Left colon (tissue), 2 donors: ENCODE measurements at regions of chr17 and their contacts with region 1.

Region 1: DNA sequence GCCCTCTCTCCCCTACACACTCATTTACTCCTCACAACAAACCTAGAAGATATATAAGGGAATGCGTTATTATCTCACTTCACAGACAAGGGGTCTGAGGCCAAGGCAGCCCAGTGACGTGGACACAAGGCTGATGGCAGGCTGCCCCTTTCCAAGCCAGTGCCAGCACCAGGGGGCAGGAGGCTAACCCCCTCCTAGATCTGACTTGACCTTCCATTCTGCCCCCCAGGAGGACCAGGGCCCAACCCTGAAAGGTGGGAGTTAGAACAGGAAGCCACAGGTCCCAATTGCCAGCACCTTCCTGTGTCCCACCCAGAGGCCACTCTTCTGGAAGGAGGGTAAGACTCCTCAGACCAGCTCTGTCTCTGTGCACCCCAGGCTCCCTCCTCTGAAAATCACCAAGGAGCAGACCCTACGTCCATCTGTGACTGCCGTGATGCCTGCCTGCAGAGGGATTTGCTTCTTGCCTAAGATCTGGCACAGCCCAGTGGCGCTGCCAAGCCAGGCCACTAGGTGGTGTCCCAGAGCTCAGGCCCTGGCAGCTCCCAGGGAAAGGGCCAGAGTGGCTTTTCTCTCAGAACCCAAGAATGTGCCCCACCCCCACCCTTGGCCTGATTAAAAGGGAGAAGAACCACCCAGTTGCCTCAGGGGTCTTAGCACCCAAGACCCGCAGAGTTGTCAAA is 42.4 kb upstream of the MRPS23 start:
- DNase-seq: peak; percentile 79 to 90
- ATAC-seq: peak; percentile 82

Region 2: DNA sequence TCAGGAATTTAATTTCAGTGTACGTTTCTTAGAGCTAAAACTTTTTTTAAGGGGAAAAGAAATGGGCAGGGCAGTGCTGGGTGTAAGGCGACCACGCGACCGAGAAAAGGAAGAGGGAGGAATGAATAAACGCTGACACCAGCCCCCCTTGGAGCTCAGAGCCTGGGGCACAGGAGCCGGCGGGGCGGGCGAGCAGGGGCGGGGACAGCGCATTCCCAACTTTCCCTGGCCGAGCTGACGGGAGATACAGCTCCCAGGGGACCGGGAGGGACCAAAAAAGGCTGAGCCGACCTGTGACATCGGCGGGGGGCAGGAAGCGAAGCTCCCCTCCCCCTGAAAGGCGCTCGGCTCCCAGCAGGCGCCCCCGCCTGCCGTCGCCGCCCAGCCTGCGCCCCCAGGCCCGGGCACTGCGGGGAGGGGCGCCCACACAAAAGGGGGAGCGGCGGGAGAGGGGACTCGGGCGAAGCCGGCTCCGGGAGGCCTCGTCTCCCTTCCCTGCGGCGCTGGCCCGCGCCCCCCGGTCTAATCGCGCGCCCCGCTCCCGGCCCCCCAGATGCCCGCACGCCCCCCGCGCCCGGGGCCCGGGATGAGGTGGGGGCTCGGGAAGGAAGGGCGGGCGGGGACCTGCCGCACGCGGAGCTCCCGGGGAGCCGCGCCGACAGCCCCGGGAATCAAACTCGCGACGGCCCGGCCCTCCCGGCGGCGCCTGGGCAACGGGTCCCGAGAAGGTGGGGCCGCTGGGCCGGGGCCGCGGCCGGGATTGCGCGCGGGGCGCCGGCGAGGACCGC is 62.3 kb after region 1 on chr17:
- intact Hi-C with region 1: loop called in 1 of 2 experiments (anchors 5 kb)
- DNase-seq: peak; percentile 58 to 69
- ATAC-seq: peak; percentile 35

Region 3: DNA sequence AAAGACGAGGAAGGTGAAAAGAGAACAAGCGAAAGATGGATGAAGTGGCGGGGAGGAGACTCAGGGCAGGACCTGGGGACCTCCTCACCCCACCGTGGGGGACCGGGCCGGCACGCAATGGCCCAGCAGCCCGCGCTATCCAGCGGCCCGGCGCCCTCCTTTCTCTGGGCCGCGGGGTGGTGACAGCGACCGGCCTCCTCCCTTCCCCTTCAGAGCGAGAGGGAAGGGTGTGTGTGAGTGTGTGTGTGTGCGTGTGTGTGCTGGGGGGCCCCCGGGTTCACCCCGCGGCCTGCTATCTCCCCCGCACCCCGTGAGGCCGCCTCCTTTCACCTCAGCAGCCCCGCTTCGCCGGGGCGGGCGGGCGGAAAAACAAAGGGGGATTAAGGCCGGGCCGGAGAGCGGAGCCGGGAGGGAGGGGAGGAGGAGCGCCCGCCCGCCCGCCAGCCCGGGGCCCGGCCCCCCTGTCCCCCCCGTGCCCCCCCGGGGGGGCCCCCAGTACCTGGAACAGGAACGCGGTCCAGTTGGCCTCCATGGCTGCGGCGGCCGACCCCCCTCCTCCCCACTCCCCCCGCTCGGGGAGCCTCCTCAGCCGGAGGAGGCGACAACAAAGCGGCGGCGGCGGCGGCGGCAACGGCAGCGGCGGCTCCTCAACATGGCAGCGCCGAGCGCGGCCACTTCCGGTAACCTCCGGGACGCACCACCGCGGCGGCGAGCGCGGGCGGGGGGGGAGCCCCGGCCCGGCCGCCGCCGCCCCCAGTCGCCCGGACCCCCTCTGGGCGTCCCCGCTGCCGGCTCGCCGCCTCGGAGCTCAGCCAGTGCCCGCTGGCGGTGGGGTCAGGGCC is 95.5 kb after region 1 on chr17 and contains the start of gene VEZF1:
- intact Hi-C with region 1: loop called in 1 of 2 experiments (anchors 10 kb)
- DNase-seq: peak; percentile 75 to 86
- ATAC-seq: peak; percentile 71
- total RNA-seq, gene VEZF1: 38.9 to 53.3 TPM